Cardiac septum (tissue), 1 donor: ENCODE measurements at regions of chr3 and their contacts with region 1.

Region 1: GRCh38 chr3:39499651-39500240 is 32.3 kb downstream of the MOBP start:
- DNase-seq: no peak

Region 2: GRCh38 chr3:39302178-39302577 is 197.6 kb before region 1 on chr3:
- intact Hi-C with region 1: no loop called
- DNase-seq: no peak

Region 3: DNA sequence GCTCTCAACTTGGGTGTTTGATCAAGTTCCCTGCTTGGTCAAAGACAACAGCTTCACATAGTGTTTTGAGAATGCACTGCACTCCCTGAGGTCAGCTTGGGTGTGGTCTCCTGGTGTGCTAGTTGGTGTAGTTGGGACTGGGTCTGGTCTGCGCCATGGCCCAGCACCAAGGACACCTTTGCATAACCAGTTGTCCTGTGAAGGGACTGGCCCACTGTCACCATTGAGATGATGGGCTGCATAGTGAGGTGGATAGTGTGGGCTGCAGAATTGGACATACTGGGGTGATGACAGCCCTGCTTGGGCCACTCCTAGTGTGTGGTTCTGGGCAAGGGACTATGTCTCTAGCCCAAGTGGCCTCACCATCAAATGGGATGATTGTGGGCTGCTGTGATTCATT is 83.8 kb before region 1 on chr3:
- intact Hi-C with region 1: loop called (anchors 5 kb)
- DNase-seq: no peak

Region 4: GRCh38 chr3:39447637-39448483 is 51.9 kb before region 1 on chr3:
- intact Hi-C with region 1: loop called (anchors 2 kb)
- DNase-seq: no peak